ENCODE measurements at regions of chr6 and their contacts with region 1.

Region 1: GRCh38 chr6:45001663-45002062 is 326.5 kb upstream of the RUNX2 start:
- DNase-seq: peak; percentile 52
- ATAC-seq: peak; percentile 100
- H3K4me3 ChIP-seq: no peak overlapping the region
- H3K27ac ChIP-seq: no peak overlapping the region
- H3K4me1 ChIP-seq: peaks cover 12% of the 10 kb centered on the region; the same call in 1 of the 2 replicates
- H3K27me3 ChIP-seq: no peaks in the 10 kb centered on the region
- CTCF ChIP-seq: no peak
- EP300 ChIP-seq: no peak
- POLR2A ChIP-seq: no peak
- RAD21 ChIP-seq: no peak

Region 2: GRCh38 chr6:44983467-44984365 is 17.9 kb before region 1 on chr6:
- CTCF ChIA-PET with region 1: interaction called, 11 read pairs
- POLR2A ChIA-PET with region 1: no interaction called
- RAD21 ChIA-PET with region 1: interaction called, 4 read pairs
- SMC1A ChIA-PET with region 1: interaction called, 6 read pairs
- in situ Hi-C with region 1: no loop called
- intact Hi-C with region 1: no loop called
- DNase-seq: no peak
- ATAC-seq: no peak
- H3K4me3 ChIP-seq: no peak overlapping the region
- H3K27ac ChIP-seq: no peak overlapping the region
- H3K4me1 ChIP-seq: no peaks in the 10 kb centered on the region
- H3K27me3 ChIP-seq: no peaks in the 10 kb centered on the region
- CTCF ChIP-seq: no peak
- EP300 ChIP-seq: no peak
- POLR2A ChIP-seq: no peak
- RAD21 ChIP-seq: no peak

Region 3: DNA sequence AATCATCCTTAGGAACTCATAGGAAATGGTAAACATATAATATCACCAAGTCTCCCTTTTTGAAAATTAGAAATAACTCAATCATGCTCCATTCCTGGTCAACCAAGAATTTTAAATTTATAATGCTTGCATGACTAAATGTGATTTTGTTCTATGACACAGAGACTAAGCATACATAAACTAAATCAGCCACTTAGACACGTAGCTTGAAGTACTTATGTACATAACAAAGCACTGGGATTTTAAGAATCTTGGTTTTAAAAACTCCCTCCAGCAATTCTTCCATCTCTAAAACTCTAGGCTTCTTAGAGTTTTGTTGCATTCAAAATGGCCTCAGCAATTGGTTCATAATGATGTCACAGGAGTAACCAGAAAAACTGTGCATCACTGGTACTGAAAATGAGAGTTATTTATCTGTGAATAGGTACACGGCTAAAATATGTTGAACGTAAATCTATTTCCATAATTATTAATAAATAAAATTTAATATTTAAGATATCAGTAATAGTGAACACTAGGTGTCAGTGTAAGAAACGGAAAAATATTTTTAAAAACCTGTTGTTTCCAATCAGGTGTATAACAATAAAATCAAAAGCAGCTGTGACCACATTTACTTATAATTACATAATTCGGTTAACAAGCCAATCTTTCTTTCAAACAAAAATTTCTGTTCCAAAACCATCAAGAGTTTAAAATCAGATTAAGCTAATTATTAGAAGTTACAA is 84.9 kb after region 1 on chr6:
- CTCF ChIA-PET with region 1: no interaction called
- POLR2A ChIA-PET with region 1: no interaction called
- RAD21 ChIA-PET with region 1: no interaction called
- SMC1A ChIA-PET with region 1: no interaction called
- in situ Hi-C with region 1: no loop called
- intact Hi-C with region 1: no loop called
- DNase-seq: no peak
- ATAC-seq: no peak
- H3K4me3 ChIP-seq: no peak overlapping the region
- H3K27ac ChIP-seq: no peak overlapping the region
- H3K4me1 ChIP-seq: no peaks in the 10 kb centered on the region
- H3K27me3 ChIP-seq: no peaks in the 10 kb centered on the region; a peak in 1 of 4 replicates
- CTCF ChIP-seq: no peak
- EP300 ChIP-seq: no peak
- POLR2A ChIP-seq: no peak
- RAD21 ChIP-seq: no peak

Measured in GM12878 (cell line).